Heart left ventricle (tissue), 16 donors: ENCODE measurements at regions of chr16 and their contacts with region 1.

Region 1: DNA sequence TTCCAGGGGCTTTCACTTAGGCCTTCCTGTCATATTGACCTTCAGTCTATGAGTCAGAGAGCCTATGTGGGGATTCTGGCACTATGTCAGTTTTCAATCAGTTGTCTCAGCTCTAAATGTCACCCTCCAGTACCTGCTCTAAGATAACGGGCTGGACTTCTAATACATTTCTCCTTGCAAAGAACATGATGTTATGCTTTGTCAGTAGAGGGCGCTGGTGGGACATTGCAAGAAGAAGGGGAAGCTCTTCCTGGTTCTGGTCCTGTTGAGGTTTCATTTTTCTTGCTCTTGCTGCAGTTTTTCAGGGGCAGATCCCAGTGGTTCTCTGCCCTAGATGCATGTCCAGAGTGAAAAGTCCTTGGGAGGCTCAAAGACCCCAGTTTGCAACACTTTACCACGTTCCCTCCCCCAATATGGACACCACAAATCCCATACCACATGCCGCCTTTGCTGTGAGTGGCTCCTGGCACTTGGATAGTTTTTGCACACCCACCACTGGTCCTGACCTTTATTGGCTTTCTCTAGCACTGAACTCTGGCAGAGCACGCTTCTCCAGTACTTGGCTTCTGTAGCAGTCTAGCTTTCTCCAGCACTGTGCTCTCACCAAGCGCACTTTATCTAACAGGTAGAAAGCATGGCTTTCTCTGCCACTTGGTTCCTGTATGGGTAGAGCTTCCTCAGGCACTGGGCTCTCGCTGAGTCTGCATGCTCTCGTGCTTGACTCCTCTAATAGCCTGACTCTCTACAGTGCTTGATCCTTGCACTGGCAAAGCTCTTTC is 49.0 kb downstream of the BCL7C start:
- DNase-seq: peak in 4 of 5 donors; percentile 71 to 84 (median 78)
- ATAC-seq: peak; percentile 62 to 85 (median 84)
- H3K4me3 ChIP-seq: peak overlapping the region in 9 of 12 donors; percentile 4 to 43 (median 30)
- H3K27ac ChIP-seq: peak overlapping the region; percentile 11 to 77 (median 47)
- H3K4me1 ChIP-seq: peaks cover 0 to 25% (median 9%) of the 10 kb centered on the region in 12 donors
- H3K27me3 ChIP-seq: no peaks in the 10 kb centered on the region
- CTCF ChIP-seq: peak; percentile 77 to 96 (median 89)
- POLR2A ChIP-seq: no peak

Region 2: GRCh38 chr16:30874821-30875717 is 30.2 kb after region 1 on chr16:
- intact Hi-C with region 1: loop called in 2 of 10 experiments (anchors 1 to 5 kb)
- DNase-seq: peak; percentile 92 to 96 (median 95)
- ATAC-seq: peak; percentile 97 to 99 (median 98)
- H3K4me3 ChIP-seq: peak overlapping the region; percentile 52 to 99 (median 87)
- H3K27ac ChIP-seq: peak overlapping the region; percentile 80 to 100 (median 94)
- H3K4me1 ChIP-seq: peaks cover 3 to 29% (median 20%) of the 10 kb centered on the region in 12 donors
- H3K27me3 ChIP-seq: no peaks in the 10 kb centered on the region
- CTCF ChIP-seq: peak in 1 of 12 donors; percentile 12
- POLR2A ChIP-seq: peak in 1 of 2 donors; percentile 86

Region 3: DNA sequence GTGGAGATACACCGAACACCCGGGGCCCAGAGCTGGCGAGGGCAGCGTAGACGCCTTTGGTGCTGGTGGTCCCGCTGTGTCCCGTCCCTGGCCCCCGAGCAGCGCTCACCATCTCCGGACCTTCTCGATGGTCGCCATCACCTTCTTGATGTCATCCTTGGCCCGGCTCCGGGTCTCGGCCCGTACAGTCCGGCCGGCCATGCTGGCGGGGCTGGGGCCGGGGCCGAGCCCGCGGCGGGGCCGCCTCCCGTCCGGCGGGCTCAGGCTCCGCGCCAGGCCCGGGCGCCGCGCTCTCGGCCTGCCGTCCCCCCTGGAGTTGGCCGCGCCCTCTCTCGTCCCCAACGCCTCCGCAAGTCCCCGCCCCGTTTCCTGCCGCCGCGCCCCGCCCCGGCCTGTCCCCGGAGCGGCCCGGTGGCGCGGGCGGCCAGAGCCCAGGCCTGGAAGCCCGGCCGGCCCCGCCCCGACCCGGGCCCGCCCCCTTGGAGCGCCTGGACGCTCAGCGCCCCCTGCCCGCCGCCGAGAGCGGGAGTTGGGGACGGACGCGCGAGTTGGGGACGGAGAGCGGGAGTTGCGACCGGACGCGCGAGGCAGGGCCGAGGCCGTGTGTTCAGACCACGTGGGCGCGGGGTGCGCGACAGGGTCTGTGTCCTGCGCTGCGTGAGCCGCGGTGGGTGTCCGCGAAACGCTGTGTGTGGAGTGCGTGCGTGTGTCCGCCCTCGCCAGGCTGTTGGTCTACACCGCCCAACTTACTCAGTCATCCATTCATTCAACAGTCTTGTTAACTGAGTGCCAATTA is 49.1 kb after region 1 on chr16 and contains the start of gene BCL7C:
- intact Hi-C with region 1: loop called in 1 of 10 experiments (anchors 2 kb)
- DNase-seq: peak; percentile 96 to 97 (median 96)
- ATAC-seq: peak; percentile 50 to 90 (median 81)
- H3K4me3 ChIP-seq: peak within 1 kb of the TSS; percentile 79 to 98 (median 89)
- H3K27ac ChIP-seq: peak within 1 kb of the TSS; percentile 81 to 99 (median 95)
- H3K4me1 ChIP-seq: peaks cover 0 to 46% (median 33%) of the 10 kb centered on the region in 12 donors
- H3K27me3 ChIP-seq: no peaks in the 10 kb centered on the region
- CTCF ChIP-seq: peak; percentile 21 to 82 (median 56)
- POLR2A ChIP-seq: peak in 1 of 2 donors; percentile 33
- total RNA-seq, gene BCL7C: 23.1 to 35.5 (median 28.1) TPM

Region 4: DNA sequence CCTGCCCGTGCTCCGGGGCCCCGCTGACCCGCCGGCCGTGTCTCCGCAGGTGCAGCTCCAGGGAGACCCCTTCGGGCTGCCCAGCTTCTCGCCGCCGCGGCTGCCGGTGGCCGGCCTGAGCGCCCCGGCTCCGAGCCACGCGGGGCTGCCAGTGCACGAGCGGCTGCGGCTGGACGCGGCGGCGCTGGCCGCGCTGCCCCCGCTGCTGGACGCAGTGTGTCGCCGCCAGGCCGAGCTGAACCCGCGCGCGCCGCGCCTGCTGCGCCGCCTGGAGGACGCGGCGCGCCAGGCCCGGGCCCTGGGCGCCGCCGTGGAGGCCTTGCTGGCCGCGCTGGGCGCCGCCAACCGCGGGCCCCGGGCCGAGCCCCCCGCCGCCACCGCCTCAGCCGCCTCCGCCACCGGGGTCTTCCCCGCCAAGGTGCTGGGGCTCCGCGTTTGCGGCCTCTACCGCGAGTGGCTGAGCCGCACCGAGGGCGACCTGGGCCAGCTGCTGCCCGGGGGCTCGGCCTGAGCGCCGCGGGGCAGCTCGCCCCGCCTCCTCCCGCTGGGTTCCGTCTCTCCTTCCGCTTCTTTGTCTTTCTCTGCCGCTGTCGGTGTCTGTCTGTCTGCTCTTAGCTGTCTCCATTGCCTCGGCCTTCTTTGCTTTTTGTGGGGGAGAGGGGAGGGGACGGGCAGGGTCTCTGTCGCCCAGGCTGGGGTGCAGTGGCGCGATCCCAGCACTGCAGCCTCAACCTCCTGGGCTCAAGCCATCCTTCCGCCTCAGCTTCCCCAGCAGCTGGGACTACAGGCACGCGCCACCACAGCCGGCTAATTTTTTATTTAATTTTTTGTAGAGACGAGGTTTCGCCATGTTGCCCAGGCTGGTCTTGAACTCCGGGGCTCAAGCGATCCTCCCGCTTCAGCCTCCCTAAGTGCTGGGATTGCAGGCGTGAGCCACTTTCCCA is 57.4 kb after region 1 on chr16:
- intact Hi-C with region 1: loop called in 8 of 10 experiments (anchors 1 to 5 kb)
- DNase-seq: peak; percentile 74 to 92 (median 79)
- ATAC-seq: peak; percentile 38 to 93 (median 80)
- H3K4me3 ChIP-seq: peak overlapping the region; percentile 29 to 72 (median 62)
- H3K27ac ChIP-seq: peak overlapping the region; percentile 68 to 96 (median 92)
- H3K4me1 ChIP-seq: peaks cover 0 to 38% (median 22%) of the 10 kb centered on the region in 12 donors
- H3K27me3 ChIP-seq: no peaks in the 10 kb centered on the region
- CTCF ChIP-seq: peak in 10 of 12 donors; percentile 6 to 58 (median 24)
- POLR2A ChIP-seq: no peak

Region 5: GRCh38 chr16:31093132-31093703 is 248.4 kb after region 1 on chr16:
- intact Hi-C with region 1: no loop called
- DNase-seq: peak in 2 of 5 donors; percentile 7 to 30
- ATAC-seq: no peak
- H3K4me3 ChIP-seq: peak overlapping the region in 10 of 12 donors; percentile 72 to 95 (median 81)
- H3K27ac ChIP-seq: peak overlapping the region in 2 of 12 donors; percentile 89 to 93
- H3K4me1 ChIP-seq: peaks cover 0 to 26% (median 18%) of the 10 kb centered on the region in 12 donors
- H3K27me3 ChIP-seq: no peaks in the 10 kb centered on the region
- CTCF ChIP-seq: no peak
- POLR2A ChIP-seq: no peak

Region 6: DNA sequence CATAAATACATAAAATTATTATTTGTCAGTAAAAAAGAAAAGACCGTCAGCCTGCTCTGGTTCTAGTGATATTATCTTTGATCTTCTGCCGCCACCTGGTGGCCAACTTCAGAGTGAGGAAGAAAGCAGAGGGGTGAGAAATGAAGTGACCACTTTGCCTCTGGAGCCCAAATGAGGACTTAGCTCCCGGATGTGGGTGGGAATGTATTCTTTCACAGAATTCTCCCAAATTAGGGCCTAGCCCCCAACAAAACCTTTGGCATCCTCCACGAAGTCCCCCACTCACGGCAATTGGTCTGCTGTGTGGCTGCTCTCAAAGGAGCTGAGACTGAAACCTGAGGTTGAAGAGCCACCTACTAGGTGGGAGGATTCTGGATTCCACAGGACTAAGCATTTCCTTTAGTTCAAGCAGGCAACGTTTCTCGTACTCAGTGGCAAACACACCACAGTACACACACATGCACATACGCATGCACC is 1023.9 kb after region 1 on chr16:
- intact Hi-C with region 1: loop called in 2 of 10 experiments (anchors 10 kb)
- DNase-seq: peak; percentile 72 to 84 (median 77)
- ATAC-seq: peak in 3 of 4 donors; percentile 55 to 69 (median 64)
- H3K4me3 ChIP-seq: peak overlapping the region in 2 of 12 donors; percentile 13 to 37
- H3K27ac ChIP-seq: peak overlapping the region in 4 of 12 donors; percentile 14 to 91 (median 18)
- H3K4me1 ChIP-seq: peaks cover 0 to 36% (median 8%) of the 10 kb centered on the region in 12 donors
- H3K27me3 ChIP-seq: no peaks in the 10 kb centered on the region
- CTCF ChIP-seq: peak; percentile 75 to 89 (median 80)
- POLR2A ChIP-seq: no peak